SK-MEL-5 (cell line): ENCODE measurements at regions of chr20 and their contacts with region 1.

Region 1: GRCh38 chr20:21577551-21577950 is 63.7 kb upstream of the NKX2-2 start:
- DNase-seq: peak; percentile 29

Region 2: DNA sequence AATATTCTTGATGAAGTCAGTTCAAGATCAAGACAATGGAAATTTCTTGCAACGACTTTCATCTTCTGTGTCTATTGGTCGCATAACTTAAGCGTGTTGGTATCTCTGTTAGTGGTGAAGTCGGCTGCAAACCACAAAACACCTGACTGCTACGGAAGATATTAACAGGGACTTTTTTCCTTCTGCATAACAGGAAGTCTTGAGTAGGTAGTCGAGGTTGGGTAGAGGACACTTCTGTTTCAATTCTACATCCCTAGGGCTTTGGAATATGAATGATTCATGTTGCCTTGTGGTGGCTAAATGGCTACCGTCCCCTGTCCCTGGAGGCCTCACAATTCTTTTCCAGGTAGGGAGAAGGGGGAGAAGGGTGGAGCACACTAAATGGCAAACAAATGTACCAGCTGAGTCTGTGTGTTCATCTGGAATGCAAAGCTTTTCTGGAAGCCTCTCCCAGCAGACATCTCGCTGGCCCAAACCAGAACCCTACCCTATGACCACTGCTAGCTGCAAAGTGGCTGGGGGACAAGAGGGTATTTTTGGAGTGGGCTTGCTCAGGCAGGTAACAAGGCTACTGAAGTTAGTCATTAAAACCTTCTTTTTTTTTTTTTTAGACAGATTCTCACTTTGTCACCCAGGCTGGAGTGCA is 29.0 kb before region 1 on chr20:
- in situ Hi-C with region 1: loop called (anchors 5 kb)
- DNase-seq: no peak